Left ventricle myocardium inferior (tissue), 1 donor: ENCODE measurements at regions of chr17 and their contacts with region 1.

Region 1: DNA sequence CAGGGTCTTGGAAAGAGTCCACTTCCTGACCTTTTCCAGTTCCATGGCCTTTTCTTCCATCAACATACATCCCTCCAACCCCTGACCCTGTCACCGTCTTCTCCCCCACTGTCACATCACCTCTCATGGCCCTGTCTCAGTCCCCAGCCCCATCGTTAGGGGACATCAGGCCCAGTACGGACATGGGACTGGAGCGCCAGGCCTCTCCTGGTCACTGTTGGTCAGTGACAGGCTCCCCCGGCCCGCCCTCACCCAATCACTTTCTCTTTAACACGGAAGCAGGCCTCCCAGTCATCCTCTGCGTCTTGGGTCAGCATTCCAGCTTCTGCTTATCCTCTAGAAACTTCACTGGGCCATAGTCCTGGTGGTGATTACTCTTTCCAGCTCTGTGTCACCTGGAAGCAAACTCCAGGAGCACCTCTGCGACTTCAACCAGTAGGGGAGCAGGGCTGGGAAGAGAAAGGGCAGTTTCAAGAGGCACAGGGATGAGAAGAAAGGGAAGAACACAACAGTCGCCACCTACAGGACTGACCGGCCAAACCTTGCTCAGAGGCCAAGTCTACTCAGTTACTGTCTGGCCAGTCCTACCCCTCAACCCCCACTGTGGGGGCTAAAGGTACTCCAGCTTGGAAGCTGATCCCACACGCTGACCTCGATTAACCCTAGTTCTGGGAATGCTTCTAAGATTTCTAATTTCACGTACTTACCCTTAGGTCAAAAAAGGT is 15.9 kb upstream of the ICAM2 start:
- DNase-seq: no peak
- H3K4me3 ChIP-seq: no peak overlapping the region
- H3K27ac ChIP-seq: no peak overlapping the region
- H3K4me1 ChIP-seq: no peaks in the 10 kb centered on the region
- H3K27me3 ChIP-seq: no peaks in the 10 kb centered on the region
- CTCF ChIP-seq: no peak

Region 2: GRCh38 chr17:63848834-63849700 is 187.3 kb before region 1 on chr17:
- intact Hi-C with region 1: no loop called
- DNase-seq: peak; percentile 93
- H3K4me3 ChIP-seq: peak overlapping the region; percentile 59
- H3K27ac ChIP-seq: peak overlapping the region; percentile 9
- H3K4me1 ChIP-seq: peaks cover 12% of the 10 kb centered on the region
- H3K27me3 ChIP-seq: no peaks in the 10 kb centered on the region
- CTCF ChIP-seq: peak; percentile 73

Region 3: DNA sequence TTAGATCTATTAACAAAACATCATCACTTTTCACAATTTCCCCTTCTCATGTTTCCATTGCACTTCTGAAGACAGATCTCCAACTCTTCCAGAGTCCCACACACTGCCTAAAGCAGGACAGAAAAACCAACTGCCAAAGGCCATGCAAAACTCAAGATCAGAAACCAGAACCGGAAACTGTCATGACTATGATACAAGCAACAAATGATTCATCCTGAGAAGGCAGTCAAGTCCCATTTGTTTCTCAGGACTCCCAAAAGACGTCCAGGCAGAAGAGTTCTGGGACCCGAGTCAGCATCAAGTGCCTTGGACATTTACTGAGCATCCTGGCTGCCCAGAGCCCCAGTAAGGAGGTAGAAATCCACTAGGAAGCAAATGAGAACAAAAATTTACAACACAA is 54.8 kb after region 1 on chr17:
- intact Hi-C with region 1: no loop called
- DNase-seq: no peak
- H3K4me3 ChIP-seq: no peak overlapping the region
- H3K27ac ChIP-seq: no peak overlapping the region
- H3K4me1 ChIP-seq: peaks cover 9% of the 10 kb centered on the region
- H3K27me3 ChIP-seq: no peaks in the 10 kb centered on the region
- CTCF ChIP-seq: no peak

Region 4: DNA sequence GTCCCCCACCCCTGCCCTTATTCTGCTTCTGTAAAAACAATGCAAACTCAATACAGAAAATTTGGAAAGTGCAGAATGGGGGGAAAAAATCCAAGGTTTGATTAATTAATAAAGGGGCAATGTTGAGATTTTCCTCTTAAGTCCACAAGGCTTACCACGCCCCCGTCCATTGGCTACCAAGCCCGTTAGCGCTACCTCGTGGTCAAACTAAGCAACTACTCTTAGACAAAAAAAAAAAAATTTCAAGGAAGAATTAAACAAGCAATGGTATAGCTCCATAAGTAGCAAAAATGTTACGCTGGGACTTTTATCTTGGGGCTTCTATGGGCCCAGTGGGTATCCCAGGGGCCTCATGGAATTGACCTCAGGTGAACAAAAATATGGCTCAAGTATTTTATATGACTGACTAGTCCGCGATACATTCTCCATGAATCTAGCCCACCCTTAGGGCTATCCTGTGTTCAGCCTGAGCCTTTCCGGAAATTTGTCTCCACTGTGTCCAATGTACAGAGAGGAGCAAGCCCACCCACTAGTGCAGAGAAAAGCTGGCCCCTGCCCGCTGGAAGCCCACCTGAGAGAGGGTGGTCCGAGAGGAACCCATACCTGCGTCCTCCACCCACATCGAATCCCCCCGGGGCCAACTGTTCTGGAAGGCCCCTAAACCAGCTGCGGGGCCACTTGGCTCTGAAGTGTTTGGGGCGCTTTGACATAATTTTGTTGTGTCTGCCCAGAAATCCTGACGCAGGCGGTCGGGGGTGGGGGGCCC is 245.8 kb after region 1 on chr17:
- intact Hi-C with region 1: loop called (anchors 10 kb)
- DNase-seq: peak; percentile 38
- H3K4me3 ChIP-seq: peak overlapping the region; percentile 9
- H3K27ac ChIP-seq: no peak overlapping the region
- H3K4me1 ChIP-seq: peaks cover 30% of the 10 kb centered on the region
- H3K27me3 ChIP-seq: no peaks in the 10 kb centered on the region
- CTCF ChIP-seq: peak; percentile 86